Naive thymus-derived CD4-positive, alpha-beta T cell (primary cell): ENCODE measurements at regions of chr11 and their contacts with region 1.

Region 1: DNA sequence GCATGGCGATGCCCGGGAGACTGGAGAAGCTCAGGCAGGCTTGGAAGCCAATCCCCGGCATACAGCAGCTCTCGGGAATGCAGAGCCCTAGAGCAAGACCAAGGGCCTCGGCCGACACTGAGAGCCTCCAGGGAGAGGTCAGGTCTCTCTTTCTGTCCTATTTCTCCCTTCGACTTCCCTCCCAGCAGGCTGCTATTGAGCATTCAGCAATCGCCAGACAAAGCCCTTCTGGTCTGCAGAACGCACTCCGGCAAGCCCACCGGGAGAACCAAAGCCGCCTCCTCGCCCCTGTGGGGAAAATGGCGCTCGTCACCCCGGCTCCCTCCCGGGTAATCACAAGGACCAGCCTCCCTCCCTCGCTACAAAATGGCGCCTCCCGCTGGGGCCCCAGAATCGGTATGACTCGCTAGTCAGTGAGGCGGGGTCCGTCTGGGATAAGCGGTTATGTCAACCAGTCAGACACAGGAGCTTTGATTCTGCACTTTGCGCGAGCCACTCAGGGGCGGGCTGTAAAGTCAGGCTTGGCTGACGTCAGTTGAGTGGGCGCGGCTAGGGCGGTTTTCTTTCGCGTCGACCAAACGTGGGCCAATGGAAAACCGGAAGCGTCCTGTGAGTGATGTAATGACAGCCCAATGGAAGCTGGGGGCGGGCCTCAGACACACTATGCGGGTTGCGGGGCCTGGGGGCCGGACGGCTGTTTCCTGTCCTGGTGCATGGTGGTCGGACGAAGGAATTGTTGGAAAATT is at the start of gene ZNF143:
- DNase-seq: peak; percentile 95 to 100 (median 100)
- ATAC-seq: peak; percentile 92
- H3K4me3 ChIP-seq: peak within 1 kb of the TSS; percentile 93
- H3K4me3 Mint-ChIP-seq: peak within 1 kb of the TSS; percentile 84 to 98 (median 96)
- H3K27ac ChIP-seq: peak within 1 kb of the TSS; percentile 98
- H3K27ac Mint-ChIP-seq: peak within 1 kb of the TSS; percentile 97 to 99 (median 99)
- H3K4me1 ChIP-seq: peaks cover 9 to 19% of the 10 kb centered on the region in 2 donors
- H3K4me1 Mint-ChIP-seq: peaks cover 21 to 34% (median 26%) of the 10 kb centered on the region in 7 donors
- H3K27me3 ChIP-seq: no peaks in the 10 kb centered on the region
- H3K27me3 Mint-ChIP-seq: no peaks in the 10 kb centered on the region
- total RNA-seq, gene ZNF143: 29.6 to 47.5 (median 34.4) TPM

Region 2: GRCh38 chr11:8682303-8683114 is 778.0 kb before region 1 on chr11 and contains the starts of genes RPL27A and TRIM66:
- CTCF ChIA-PET with region 1: no interaction called
- POLR2A ChIA-PET with region 1: interaction called, 7 read pairs
- intact Hi-C with region 1: loop called (anchors 1 kb)
- DNase-seq: peak; percentile 97 to 100 (median 99)
- ATAC-seq: peak; percentile 98
- H3K4me3 ChIP-seq: peak within 1 kb of the TSS; percentile 73
- H3K4me3 Mint-ChIP-seq: peak within 1 kb of the TSS; percentile 89 to 97 (median 96)
- H3K27ac ChIP-seq: peak within 1 kb of the TSS; percentile 99
- H3K27ac Mint-ChIP-seq: peak within 1 kb of the TSS; percentile 97 to 99 (median 98)
- H3K4me1 ChIP-seq: peaks cover 17% of the 10 kb centered on the region in 2 donors
- H3K4me1 Mint-ChIP-seq: peaks cover 30 to 57% (median 43%) of the 10 kb centered on the region in 7 donors
- H3K27me3 ChIP-seq: no peaks in the 10 kb centered on the region
- H3K27me3 Mint-ChIP-seq: no peaks in the 10 kb centered on the region
- total RNA-seq, gene RPL27A: 758 to 2,116 (median 1,670) TPM
- total RNA-seq, gene TRIM66: 16.0 to 37.6 (median 24.2) TPM

Region 3: GRCh38 chr11:9170450-9170849 is 290.0 kb before region 1 on chr11:
- CTCF ChIA-PET with region 1: no interaction called
- POLR2A ChIA-PET with region 1: interaction called, 4 read pairs
- intact Hi-C with region 1: loop called (anchors 2 to 5 kb)
- DNase-seq: no peak
- ATAC-seq: no peak
- H3K4me3 ChIP-seq: no peak overlapping the region
- H3K4me3 Mint-ChIP-seq: no peak overlapping the region
- H3K27ac ChIP-seq: no peak overlapping the region
- H3K27ac Mint-ChIP-seq: peak overlapping the region in 1 of 9 donors; percentile 27
- H3K4me1 ChIP-seq: no peaks in the 10 kb centered on the region
- H3K4me1 Mint-ChIP-seq: peaks cover 0 to 37% (median 14%) of the 10 kb centered on the region in 7 donors
- H3K27me3 ChIP-seq: no peaks in the 10 kb centered on the region
- H3K27me3 Mint-ChIP-seq: no peaks in the 10 kb centered on the region

Region 4: GRCh38 chr11:9314291-9315036 is 146.0 kb before region 1 on chr11 and contains the start of gene TMEM41B:
- CTCF ChIA-PET with region 1: no interaction called
- POLR2A ChIA-PET with region 1: interaction called, 36 read pairs
- intact Hi-C with region 1: loop called (anchors 1 kb)
- DNase-seq: peak; percentile 98 to 100 (median 98)
- ATAC-seq: peak; percentile 98
- H3K4me3 ChIP-seq: peak within 1 kb of the TSS; percentile 90
- H3K4me3 Mint-ChIP-seq: peak within 1 kb of the TSS; percentile 97 to 100 (median 99)
- H3K27ac ChIP-seq: peak within 1 kb of the TSS; percentile 88
- H3K27ac Mint-ChIP-seq: peak within 1 kb of the TSS; percentile 96 to 99 (median 98)
- H3K4me1 ChIP-seq: peaks cover 16 to 23% of the 10 kb centered on the region in 2 donors
- H3K4me1 Mint-ChIP-seq: peaks cover 19 to 49% (median 44%) of the 10 kb centered on the region in 7 donors
- H3K27me3 ChIP-seq: no peaks in the 10 kb centered on the region
- H3K27me3 Mint-ChIP-seq: peaks cover 6 to 29% (median 11%) of the 10 kb centered on the region in 5 donors
- total RNA-seq, gene TMEM41B: 33.9 to 73.7 (median 49.0) TPM

Region 5: DNA sequence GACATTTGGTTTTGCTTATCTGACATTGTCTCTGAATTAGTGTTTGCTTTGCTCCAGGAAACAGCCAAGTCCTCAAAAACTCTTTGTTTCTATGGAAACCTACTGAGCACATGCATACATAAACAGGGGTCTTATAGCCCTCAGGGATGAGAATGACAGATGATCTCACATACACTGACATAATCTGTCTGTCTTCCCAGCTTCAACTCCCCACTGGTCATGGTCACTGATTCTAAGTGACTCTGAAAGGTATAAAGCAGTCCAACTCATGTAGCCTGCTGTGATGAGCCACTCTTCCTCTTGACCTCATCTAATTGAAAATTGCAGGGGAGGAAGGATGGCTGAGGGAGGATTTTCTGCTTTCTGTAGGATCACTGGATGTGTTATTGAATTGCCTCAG is 12.9 kb after region 1 on chr11:
- CTCF ChIA-PET with region 1: no interaction called
- POLR2A ChIA-PET with region 1: interaction called, 20 read pairs
- intact Hi-C with region 1: no loop called
- DNase-seq: no peak
- ATAC-seq: no peak
- H3K4me3 ChIP-seq: no peak overlapping the region
- H3K4me3 Mint-ChIP-seq: no peak overlapping the region
- H3K27ac ChIP-seq: no peak overlapping the region
- H3K27ac Mint-ChIP-seq: no peak overlapping the region
- H3K4me1 ChIP-seq: no peaks in the 10 kb centered on the region
- H3K4me1 Mint-ChIP-seq: peaks cover 0 to 11% (median 9%) of the 10 kb centered on the region in 7 donors
- H3K27me3 ChIP-seq: no peaks in the 10 kb centered on the region
- H3K27me3 Mint-ChIP-seq: no peaks in the 10 kb centered on the region

Region 6: GRCh38 chr11:9498457-9499078 is 38.1 kb after region 1 on chr11:
- CTCF ChIA-PET with region 1: no interaction called
- POLR2A ChIA-PET with region 1: no interaction called
- intact Hi-C with region 1: no loop called
- DNase-seq: no peak
- ATAC-seq: no peak
- H3K4me3 ChIP-seq: no peak overlapping the region
- H3K4me3 Mint-ChIP-seq: no peak overlapping the region
- H3K27ac ChIP-seq: no peak overlapping the region
- H3K27ac Mint-ChIP-seq: peak overlapping the region in 2 of 9 donors; percentile 48 to 71
- H3K4me1 ChIP-seq: no peaks in the 10 kb centered on the region
- H3K4me1 Mint-ChIP-seq: no peaks in the 10 kb centered on the region
- H3K27me3 ChIP-seq: no peaks in the 10 kb centered on the region
- H3K27me3 Mint-ChIP-seq: no peaks in the 10 kb centered on the region

Region 7: GRCh38 chr11:9527481-9528140 is 67.1 kb after region 1 on chr11:
- CTCF ChIA-PET with region 1: no interaction called
- POLR2A ChIA-PET with region 1: no interaction called
- intact Hi-C with region 1: no loop called
- DNase-seq: no peak
- ATAC-seq: no peak
- H3K4me3 ChIP-seq: no peak overlapping the region
- H3K4me3 Mint-ChIP-seq: no peak overlapping the region
- H3K27ac ChIP-seq: no peak overlapping the region
- H3K27ac Mint-ChIP-seq: no peak overlapping the region
- H3K4me1 ChIP-seq: no peaks in the 10 kb centered on the region
- H3K4me1 Mint-ChIP-seq: no peaks in the 10 kb centered on the region
- H3K27me3 ChIP-seq: no peaks in the 10 kb centered on the region
- H3K27me3 Mint-ChIP-seq: no peaks in the 10 kb centered on the region

Region 8: DNA sequence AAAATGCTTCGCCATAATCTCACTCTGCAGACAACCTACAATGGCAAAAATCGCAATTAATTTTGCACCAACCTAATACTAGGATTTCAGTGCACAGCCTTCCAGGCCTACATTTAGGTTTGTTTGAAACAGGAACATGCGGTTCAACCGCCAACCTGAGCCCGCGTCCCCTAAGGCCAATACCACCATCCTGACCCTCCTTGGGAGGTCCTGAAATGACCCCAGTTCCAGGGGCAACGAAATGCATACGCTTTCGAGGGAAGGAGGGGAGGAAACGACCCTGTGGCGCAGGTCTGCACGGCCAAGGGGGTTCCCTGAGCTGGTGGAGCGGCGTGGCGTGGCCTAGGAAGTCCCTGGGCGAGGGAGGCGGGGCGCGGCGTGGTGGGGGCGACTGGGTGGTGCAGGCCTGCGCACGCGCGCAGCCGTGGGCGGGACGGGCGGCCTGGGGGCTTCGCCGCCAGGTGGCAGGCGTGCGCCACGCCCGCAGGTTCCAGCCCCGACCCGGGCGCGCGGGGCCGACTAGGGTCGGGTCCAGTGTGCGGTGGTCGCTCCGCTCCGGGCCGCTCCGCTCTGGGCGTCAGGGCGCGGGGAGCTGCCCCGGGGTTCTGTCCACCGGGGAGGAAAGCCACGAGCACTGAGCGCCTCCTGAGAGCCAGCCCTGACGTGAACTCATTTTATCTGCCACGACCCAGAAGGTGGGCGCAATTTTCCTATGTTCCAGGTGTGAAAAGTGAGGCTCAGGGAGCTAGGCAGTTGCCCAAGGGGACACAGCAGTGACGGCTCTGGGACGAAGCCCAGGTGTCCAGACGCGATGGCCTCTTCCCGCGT is 297.5 kb after region 1 on chr11:
- CTCF ChIA-PET with region 1: no interaction called
- POLR2A ChIA-PET with region 1: interaction called, 3 read pairs
- intact Hi-C with region 1: loop called in 1 of 2 experiments (anchors 1 kb)
- DNase-seq: peak; percentile 79 to 97 (median 90)
- ATAC-seq: peak; percentile 94
- H3K4me3 ChIP-seq: peak overlapping the region; percentile 91
- H3K4me3 Mint-ChIP-seq: peak overlapping the region; percentile 77 to 86 (median 84)
- H3K27ac ChIP-seq: peak overlapping the region; percentile 73
- H3K27ac Mint-ChIP-seq: peak overlapping the region; percentile 34 to 91 (median 81)
- H3K4me1 ChIP-seq: peaks cover 7 to 9% of the 10 kb centered on the region in 2 donors
- H3K4me1 Mint-ChIP-seq: peaks cover 12 to 39% (median 18%) of the 10 kb centered on the region in 7 donors
- H3K27me3 ChIP-seq: no peaks in the 10 kb centered on the region
- H3K27me3 Mint-ChIP-seq: no peaks in the 10 kb centered on the region

Region 9: GRCh38 chr11:9825315-9825714 is 364.8 kb after region 1 on chr11:
- CTCF ChIA-PET with region 1: no interaction called
- POLR2A ChIA-PET with region 1: no interaction called
- intact Hi-C with region 1: no loop called
- DNase-seq: no peak
- ATAC-seq: no peak
- H3K4me3 ChIP-seq: no peak overlapping the region
- H3K4me3 Mint-ChIP-seq: no peak overlapping the region
- H3K27ac ChIP-seq: no peak overlapping the region
- H3K27ac Mint-ChIP-seq: no peak overlapping the region
- H3K4me1 ChIP-seq: no peaks in the 10 kb centered on the region
- H3K4me1 Mint-ChIP-seq: no peaks in the 10 kb centered on the region
- H3K27me3 ChIP-seq: no peaks in the 10 kb centered on the region
- H3K27me3 Mint-ChIP-seq: no peaks in the 10 kb centered on the region

Region 10: GRCh38 chr11:10750838-10751580 is 1290.5 kb after region 1 on chr11 and contains the start of gene CTR9:
- CTCF ChIA-PET with region 1: no interaction called
- POLR2A ChIA-PET with region 1: no interaction called
- intact Hi-C with region 1: loop called in 1 of 2 experiments (anchors 2 kb)
- DNase-seq: peak; percentile 78 to 94 (median 88)
- ATAC-seq: peak; percentile 96
- H3K4me3 ChIP-seq: peak within 1 kb of the TSS; percentile 79
- H3K4me3 Mint-ChIP-seq: peak within 1 kb of the TSS; percentile 95 to 99 (median 97)
- H3K27ac ChIP-seq: peak within 1 kb of the TSS; percentile 85
- H3K27ac Mint-ChIP-seq: peak within 1 kb of the TSS; percentile 90 to 96 (median 91)
- H3K4me1 ChIP-seq: peaks cover 7 to 8% of the 10 kb centered on the region in 2 donors
- H3K4me1 Mint-ChIP-seq: peaks cover 12 to 36% (median 31%) of the 10 kb centered on the region in 7 donors
- H3K27me3 ChIP-seq: no peaks in the 10 kb centered on the region
- H3K27me3 Mint-ChIP-seq: no peaks in the 10 kb centered on the region
- total RNA-seq, gene CTR9: 23.8 to 64.0 (median 47.8) TPM